K562 (cell line): ENCODE measurements at regions of chr15 and their contacts with region 1.

Region 1: GRCh38 chr15:52256366-52256765 is 39.2 kb downstream of the MYO5C start:
- DNase-seq: peak; percentile 66 to 76 (median 68)
- ATAC-seq: peak; percentile 75
- H3K4me3 ChIP-seq: no peak overlapping the region
- H3K27ac ChIP-seq: no peak overlapping the region
- H3K4me1 ChIP-seq: no peaks in the 10 kb centered on the region; a peak in 1 of 5 replicates
- H3K27me3 ChIP-seq: peaks cover 13 to 36% of the 10 kb centered on the region in 2 experiments; a peak in 4 of 5 replicates
- CTCF ChIP-seq: peak; percentile 64 to 88 (median 74)
- EP300 ChIP-seq: no peak
- POLR2A ChIP-seq: no peak
- RAD21 ChIP-seq: peak; percentile 74 to 87

Region 2: GRCh38 chr15:52331490-52332240 is 75.3 kb after region 1 on chr15:
- CTCF ChIA-PET with region 1: no interaction called
- POLR2A ChIA-PET with region 1: no interaction called
- in situ Hi-C with region 1: no loop called
- intact Hi-C with region 1: loop called (anchors 5 kb)
- DNase-seq: peak in 2 of 4 experiments; percentile 14 to 29
- ATAC-seq: peak; percentile 62; the same call in 2 of the 3 replicates
- H3K4me3 ChIP-seq: no peak overlapping the region
- H3K27ac ChIP-seq: no peak overlapping the region
- H3K4me1 ChIP-seq: no peaks in the 10 kb centered on the region
- H3K27me3 ChIP-seq: no peaks in the 10 kb centered on the region
- CTCF ChIP-seq: peak; percentile 29 to 56 (median 36); a peak in 3 of 6 replicates
- EP300 ChIP-seq: no peak
- POLR2A ChIP-seq: no peak
- RAD21 ChIP-seq: peak; percentile 73 to 80

Region 3: DNA sequence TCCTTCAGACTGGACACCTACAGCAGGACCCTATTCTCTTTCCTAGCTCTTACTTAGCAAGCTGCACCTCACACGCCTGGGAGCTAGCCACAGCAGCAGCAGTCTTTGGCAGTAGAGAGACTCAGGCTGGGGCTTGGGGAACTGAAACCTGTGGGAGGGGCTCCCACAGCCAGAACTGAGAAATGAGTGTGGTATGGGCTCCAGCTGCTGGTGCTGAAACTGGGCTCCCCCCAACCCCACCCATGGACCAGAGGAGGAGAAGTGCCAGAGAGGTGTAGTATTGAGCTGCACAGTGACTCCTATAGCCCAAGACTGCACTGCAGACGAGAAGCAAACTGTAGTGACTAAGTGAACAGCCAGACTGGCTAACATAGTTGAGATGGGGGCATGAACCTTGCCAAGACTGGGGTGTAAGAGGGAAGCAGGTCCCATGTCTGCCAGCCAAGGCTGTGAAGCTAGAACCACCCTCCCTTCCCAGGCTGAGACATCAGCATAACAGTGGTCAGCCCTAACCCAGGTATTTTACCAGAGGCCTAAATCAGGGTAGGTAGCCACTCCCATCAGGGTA is 209.9 kb after region 1 on chr15:
- CTCF ChIA-PET with region 1: no interaction called
- POLR2A ChIA-PET with region 1: no interaction called
- in situ Hi-C with region 1: no loop called
- intact Hi-C with region 1: loop called (anchors 10 kb)
- DNase-seq: no peak
- ATAC-seq: no peak
- H3K4me3 ChIP-seq: no peak overlapping the region
- H3K27ac ChIP-seq: no peak overlapping the region
- H3K4me1 ChIP-seq: no peaks in the 10 kb centered on the region
- H3K27me3 ChIP-seq: peaks cover 0 to 22% of the 10 kb centered on the region in 2 experiments; a peak in 3 of 5 replicates
- CTCF ChIP-seq: no peak
- EP300 ChIP-seq: no peak
- POLR2A ChIP-seq: no peak
- RAD21 ChIP-seq: no peak